Sciatic nerve (tissue), 2 donors: ENCODE measurements at regions of chr5 and their contacts with region 1.

Region 1: GRCh38 chr5:145198525-145199260 is 636.4 kb downstream of the PRELID2 start:
- DNase-seq: no peak
- ATAC-seq: no peak

Region 2: GRCh38 chr5:145157841-145158240 is 40.9 kb before region 1 on chr5:
- intact Hi-C with region 1: no loop called
- DNase-seq: no peak
- ATAC-seq: no peak

Region 3: GRCh38 chr5:146520731-146521130 is 1322.0 kb after region 1 on chr5:
- intact Hi-C with region 1: loop called (anchors 5 kb)
- DNase-seq: no peak
- ATAC-seq: no peak